Activated CD4-positive, alpha-beta memory T cell treated with anti-CD3 and anti-CD28 coated beads, Interleukin-2, amount 10 ng/mL, durations not matched to agents 7 days and 5 days (primary cell): ENCODE measurements at regions of chr5 and their contacts with region 1.

Region 1: GRCh38 chr5:149345147-149345875 is at the start of gene GRPEL2:
- DNase-seq: peak; percentile 94
- H3K4me3 Mint-ChIP-seq: peak within 1 kb of the TSS; percentile 81
- H3K27ac Mint-ChIP-seq: peak within 1 kb of the TSS; percentile 87
- H3K4me1 Mint-ChIP-seq: peaks cover 47% of the 10 kb centered on the region
- H3K27me3 Mint-ChIP-seq: no peaks in the 10 kb centered on the region
- total RNA-seq, gene GRPEL2: 43.8 to 49.4 TPM

Region 2: DNA sequence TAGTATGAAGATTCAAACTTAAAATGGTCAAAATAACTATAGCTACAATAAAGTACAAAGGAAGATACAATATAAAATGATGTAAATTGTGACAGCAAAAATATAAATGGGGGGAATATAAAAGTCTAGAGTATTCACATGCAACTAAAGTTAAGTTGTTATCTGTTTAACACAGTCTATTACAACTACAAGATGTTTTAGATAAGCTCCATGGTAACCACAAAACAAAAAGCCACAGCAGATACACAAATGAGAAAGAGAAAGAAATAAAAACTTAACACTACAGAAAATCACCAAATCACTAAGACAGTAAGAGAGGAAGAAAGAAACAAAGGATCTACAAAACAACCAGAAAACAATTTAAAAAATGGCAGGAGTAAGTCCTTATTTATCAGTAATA is 265.4 kb before region 1 on chr5:
- CTCF ChIA-PET with region 1: no interaction called
- POLR2A ChIA-PET with region 1: no interaction called
- DNase-seq: no peak
- H3K4me3 Mint-ChIP-seq: no peak overlapping the region
- H3K27ac Mint-ChIP-seq: no peak overlapping the region
- H3K4me1 Mint-ChIP-seq: peaks cover 4% of the 10 kb centered on the region
- H3K27me3 Mint-ChIP-seq: peaks cover 3% of the 10 kb centered on the region

Region 3: GRCh38 chr5:149172261-149172660 is 173.1 kb before region 1 on chr5:
- CTCF ChIA-PET with region 1: no interaction called
- POLR2A ChIA-PET with region 1: no interaction called
- DNase-seq: peak; percentile 46
- H3K4me3 Mint-ChIP-seq: no peak overlapping the region
- H3K27ac Mint-ChIP-seq: no peak overlapping the region
- H3K4me1 Mint-ChIP-seq: peaks cover 10% of the 10 kb centered on the region
- H3K27me3 Mint-ChIP-seq: peaks cover 11% of the 10 kb centered on the region

Region 4: GRCh38 chr5:149240354-149240998 is 104.8 kb before region 1 on chr5:
- CTCF ChIA-PET with region 1: no interaction called
- POLR2A ChIA-PET with region 1: interaction called, 12 read pairs
- DNase-seq: peak; percentile 94
- H3K4me3 Mint-ChIP-seq: peak overlapping the region; percentile 24
- H3K27ac Mint-ChIP-seq: peak overlapping the region; percentile 85
- H3K4me1 Mint-ChIP-seq: peaks cover 36% of the 10 kb centered on the region
- H3K27me3 Mint-ChIP-seq: peaks cover 13% of the 10 kb centered on the region

Region 5: GRCh38 chr5:149323210-149323609 is 22.1 kb before region 1 on chr5:
- CTCF ChIA-PET with region 1: interaction called, 5 read pairs
- POLR2A ChIA-PET with region 1: interaction called, 14 read pairs
- DNase-seq: no peak
- H3K4me3 Mint-ChIP-seq: no peak overlapping the region
- H3K27ac Mint-ChIP-seq: no peak overlapping the region
- H3K4me1 Mint-ChIP-seq: peaks cover 2% of the 10 kb centered on the region
- H3K27me3 Mint-ChIP-seq: no peaks in the 10 kb centered on the region

Region 6: GRCh38 chr5:149333711-149334443 is 11.4 kb before region 1 on chr5:
- CTCF ChIA-PET with region 1: interaction called, 6 read pairs
- POLR2A ChIA-PET with region 1: interaction called, 14 read pairs
- DNase-seq: no peak
- H3K4me3 Mint-ChIP-seq: no peak overlapping the region
- H3K27ac Mint-ChIP-seq: no peak overlapping the region
- H3K4me1 Mint-ChIP-seq: no peaks in the 10 kb centered on the region
- H3K27me3 Mint-ChIP-seq: peaks cover 8% of the 10 kb centered on the region

Region 7: DNA sequence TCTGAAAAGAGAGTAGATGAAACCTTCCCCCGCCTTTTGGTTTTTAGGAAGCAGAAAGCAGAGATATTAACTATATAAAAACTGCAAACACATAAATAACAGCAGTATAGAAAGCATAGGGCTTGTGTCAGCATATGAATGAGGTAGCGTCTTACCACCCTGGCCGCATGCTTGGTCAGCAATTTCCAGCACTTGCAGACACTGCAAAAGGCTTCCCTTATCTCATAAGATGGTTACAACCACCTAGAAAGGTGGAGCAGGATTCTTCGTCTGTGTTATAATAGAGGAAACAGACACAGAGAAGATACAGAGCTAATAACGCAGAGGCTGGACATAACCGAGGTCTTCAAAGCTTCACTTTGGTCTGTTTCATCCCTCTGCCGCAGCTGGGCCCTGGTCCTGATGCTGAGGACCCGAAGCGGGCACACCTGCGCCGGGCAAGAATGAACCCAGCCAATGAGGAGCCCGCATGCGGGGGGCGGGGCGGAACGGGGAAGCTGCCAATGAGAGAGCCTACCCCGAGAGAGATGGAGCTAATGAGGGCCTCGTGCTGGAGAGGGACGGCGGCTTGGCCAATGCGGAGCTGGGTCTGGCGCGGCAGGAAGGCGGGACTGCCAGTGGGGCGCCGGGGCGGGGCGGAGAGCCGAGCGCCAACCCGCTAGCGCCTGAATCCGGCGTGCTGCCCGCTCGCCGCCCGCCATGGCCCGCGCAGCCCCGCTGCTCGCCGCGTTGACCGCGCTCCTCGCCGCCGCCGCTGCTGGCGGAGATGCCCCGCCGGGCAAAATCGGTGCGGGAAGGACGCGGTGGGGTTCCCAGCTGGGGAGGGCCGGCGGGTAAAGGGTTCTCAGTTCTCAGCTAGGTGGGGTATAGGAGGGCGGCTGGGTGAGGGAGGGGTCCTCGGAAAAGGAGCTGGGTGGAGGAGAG is 12.3 kb after region 1 on chr5 and contains the start of gene PCYOX1L:
- CTCF ChIA-PET with region 1: interaction called, 35 read pairs
- POLR2A ChIA-PET with region 1: interaction called, 445 read pairs
- DNase-seq: peak; percentile 94
- H3K4me3 Mint-ChIP-seq: peak within 1 kb of the TSS; percentile 92
- H3K27ac Mint-ChIP-seq: peak within 1 kb of the TSS; percentile 85
- H3K4me1 Mint-ChIP-seq: peaks cover 71% of the 10 kb centered on the region
- H3K27me3 Mint-ChIP-seq: no peaks in the 10 kb centered on the region
- total RNA-seq, gene PCYOX1L: 41.2 to 42.1 TPM